ENCODE measurements at regions of chr1 and their contacts with region 1.

Region 1: GRCh38 chr1:179365320-179366092 is at the start of gene AXDND1:
- DNase-seq: peak; percentile 86 to 91
- ATAC-seq: peak; percentile 96
- total RNA-seq, gene AXDND1: 3.8 to 12.5 TPM

Region 2: GRCh38 chr1:179081687-179082332 is 283.7 kb before region 1 on chr1 and contains the start of gene TOR3A:
- intact Hi-C with region 1: loop called in 1 of 2 experiments (anchors 5 kb)
- DNase-seq: peak; percentile 94 to 97
- ATAC-seq: peak; percentile 93
- total RNA-seq, gene TOR3A: 26.9 to 27.4 TPM